Activated B cell treated with CpG ODN at 0.5 μM for 24 hours (primary cell): ENCODE measurements at regions of chr5 and their contacts with region 1.

Region 1: GRCh38 chr5:119340597-119341218 is 15.1 kb upstream of the TNFAIP8 start:
- DNase-seq: no peak
- ATAC-seq: peak; percentile 25
- H3K4me3 Mint-ChIP-seq: peak overlapping the region; percentile 79
- H3K27ac Mint-ChIP-seq: peak overlapping the region; percentile 96
- H3K4me1 Mint-ChIP-seq: peaks cover 95% of the 10 kb centered on the region
- H3K27me3 Mint-ChIP-seq: no peaks in the 10 kb centered on the region
- CTCF ChIP-seq: no peak

Region 2: GRCh38 chr5:119212676-119213075 is 128.0 kb before region 1 on chr5:
- CTCF ChIA-PET with region 1: no interaction called
- POLR2A ChIA-PET with region 1: no interaction called
- intact Hi-C with region 1: no loop called
- DNase-seq: no peak
- ATAC-seq: no peak
- H3K4me3 Mint-ChIP-seq: no peak overlapping the region
- H3K27ac Mint-ChIP-seq: no peak overlapping the region
- H3K4me1 Mint-ChIP-seq: peaks cover 2% of the 10 kb centered on the region
- H3K27me3 Mint-ChIP-seq: no peaks in the 10 kb centered on the region
- CTCF ChIP-seq: no peak

Region 3: DNA sequence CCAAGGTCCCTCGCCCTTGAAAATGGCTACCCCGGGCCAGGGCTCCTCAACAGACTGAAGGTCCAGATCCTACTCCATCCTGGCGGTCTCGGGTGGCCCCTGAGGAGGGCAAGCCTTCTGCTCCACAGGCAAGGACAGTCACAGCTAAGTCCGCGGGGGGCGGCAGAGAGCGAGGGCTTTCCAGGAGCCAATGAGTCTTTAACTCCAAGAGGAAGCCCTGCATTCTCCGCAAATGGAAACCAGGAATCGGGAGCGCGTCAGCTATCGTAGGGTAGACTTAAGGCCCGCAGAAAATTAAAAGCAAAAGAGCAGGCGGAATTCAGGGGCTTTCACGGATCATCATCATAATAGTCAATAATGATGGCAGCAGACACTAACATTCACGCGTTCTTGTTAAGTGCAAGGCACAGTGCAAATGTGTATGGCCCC is 72.7 kb before region 1 on chr5:
- CTCF ChIA-PET with region 1: no interaction called
- POLR2A ChIA-PET with region 1: interaction called, 38 read pairs
- intact Hi-C with region 1: loop called (anchors 1 kb)
- DNase-seq: peak; percentile 62
- ATAC-seq: peak; percentile 65
- H3K4me3 Mint-ChIP-seq: peak overlapping the region; percentile 95
- H3K27ac Mint-ChIP-seq: peak overlapping the region; percentile 95
- H3K4me1 Mint-ChIP-seq: peaks cover 50% of the 10 kb centered on the region
- H3K27me3 Mint-ChIP-seq: no peaks in the 10 kb centered on the region
- CTCF ChIP-seq: no peak

Region 4: DNA sequence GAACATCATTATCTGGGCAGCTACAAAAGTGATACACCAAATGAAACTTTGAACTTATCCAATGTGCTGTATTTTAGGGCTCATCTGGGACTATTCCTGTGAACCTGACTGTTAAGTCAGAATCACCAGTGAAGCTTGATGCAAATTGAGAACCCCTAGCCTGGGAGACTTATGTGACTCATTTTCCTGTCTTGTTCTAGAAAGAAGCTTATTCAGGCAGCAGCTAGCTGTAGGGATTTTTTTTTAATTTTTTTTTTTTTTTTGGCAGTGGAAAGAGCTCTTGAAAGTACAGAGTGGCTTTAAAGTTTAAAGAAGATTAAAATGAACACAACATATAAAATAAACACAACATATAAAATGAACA is 66.0 kb before region 1 on chr5:
- CTCF ChIA-PET with region 1: interaction called, 4 read pairs
- POLR2A ChIA-PET with region 1: interaction called, 38 read pairs
- intact Hi-C with region 1: loop called (anchors 1 kb)
- DNase-seq: no peak
- ATAC-seq: peak; percentile 42
- H3K4me3 Mint-ChIP-seq: peak overlapping the region; percentile 78
- H3K27ac Mint-ChIP-seq: peak overlapping the region; percentile 89
- H3K4me1 Mint-ChIP-seq: peaks cover 97% of the 10 kb centered on the region
- H3K27me3 Mint-ChIP-seq: no peaks in the 10 kb centered on the region
- CTCF ChIP-seq: no peak

Region 5: DNA sequence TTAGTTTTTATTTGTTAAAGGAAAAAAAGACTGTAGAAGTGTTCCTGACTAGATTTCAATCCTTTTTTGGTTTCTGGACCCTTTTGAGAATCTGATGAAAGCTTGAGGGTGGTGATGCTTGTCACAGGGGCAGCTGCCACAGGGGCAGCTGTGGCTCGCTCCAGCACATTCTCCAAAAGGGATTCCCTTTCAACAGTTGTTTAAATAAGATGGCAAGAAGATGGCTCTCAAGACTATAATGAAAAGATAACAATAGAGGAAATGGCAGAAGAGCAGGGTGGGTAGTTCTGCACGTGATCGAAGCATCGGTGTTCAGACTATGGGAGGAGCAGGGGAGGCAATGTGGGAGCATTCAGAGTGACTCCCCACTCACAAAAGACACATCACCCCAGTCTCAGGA is 31.4 kb before region 1 on chr5:
- CTCF ChIA-PET with region 1: interaction called, 22 read pairs
- POLR2A ChIA-PET with region 1: interaction called, 7 read pairs
- intact Hi-C with region 1: loop called (anchors 5 kb)
- DNase-seq: no peak
- ATAC-seq: no peak
- H3K4me3 Mint-ChIP-seq: peak overlapping the region; percentile 73
- H3K27ac Mint-ChIP-seq: peak overlapping the region; percentile 92
- H3K4me1 Mint-ChIP-seq: peaks cover 94% of the 10 kb centered on the region
- H3K27me3 Mint-ChIP-seq: no peaks in the 10 kb centered on the region
- CTCF ChIP-seq: no peak

Region 6: GRCh38 chr5:119328753-119329602 is 11.7 kb before region 1 on chr5:
- CTCF ChIA-PET with region 1: interaction called, 4 read pairs
- POLR2A ChIA-PET with region 1: interaction called, 16 read pairs
- intact Hi-C with region 1: loop called (anchors 1 kb)
- DNase-seq: no peak
- ATAC-seq: no peak
- H3K4me3 Mint-ChIP-seq: no peak overlapping the region
- H3K27ac Mint-ChIP-seq: peak overlapping the region; percentile 69
- H3K4me1 Mint-ChIP-seq: peaks cover 94% of the 10 kb centered on the region
- H3K27me3 Mint-ChIP-seq: no peaks in the 10 kb centered on the region
- CTCF ChIP-seq: no peak

Region 7: GRCh38 chr5:119367502-119368237 is 27.0 kb after region 1 on chr5:
- CTCF ChIA-PET with region 1: interaction called, 3 read pairs
- POLR2A ChIA-PET with region 1: interaction called, 388 read pairs
- intact Hi-C with region 1: loop called (anchors 1 kb)
- DNase-seq: no peak
- ATAC-seq: peak; percentile 68
- H3K4me3 Mint-ChIP-seq: peak overlapping the region; percentile 71
- H3K27ac Mint-ChIP-seq: peak overlapping the region; percentile 84
- H3K4me1 Mint-ChIP-seq: peaks cover 89% of the 10 kb centered on the region
- H3K27me3 Mint-ChIP-seq: no peaks in the 10 kb centered on the region
- CTCF ChIP-seq: no peak

Region 8: DNA sequence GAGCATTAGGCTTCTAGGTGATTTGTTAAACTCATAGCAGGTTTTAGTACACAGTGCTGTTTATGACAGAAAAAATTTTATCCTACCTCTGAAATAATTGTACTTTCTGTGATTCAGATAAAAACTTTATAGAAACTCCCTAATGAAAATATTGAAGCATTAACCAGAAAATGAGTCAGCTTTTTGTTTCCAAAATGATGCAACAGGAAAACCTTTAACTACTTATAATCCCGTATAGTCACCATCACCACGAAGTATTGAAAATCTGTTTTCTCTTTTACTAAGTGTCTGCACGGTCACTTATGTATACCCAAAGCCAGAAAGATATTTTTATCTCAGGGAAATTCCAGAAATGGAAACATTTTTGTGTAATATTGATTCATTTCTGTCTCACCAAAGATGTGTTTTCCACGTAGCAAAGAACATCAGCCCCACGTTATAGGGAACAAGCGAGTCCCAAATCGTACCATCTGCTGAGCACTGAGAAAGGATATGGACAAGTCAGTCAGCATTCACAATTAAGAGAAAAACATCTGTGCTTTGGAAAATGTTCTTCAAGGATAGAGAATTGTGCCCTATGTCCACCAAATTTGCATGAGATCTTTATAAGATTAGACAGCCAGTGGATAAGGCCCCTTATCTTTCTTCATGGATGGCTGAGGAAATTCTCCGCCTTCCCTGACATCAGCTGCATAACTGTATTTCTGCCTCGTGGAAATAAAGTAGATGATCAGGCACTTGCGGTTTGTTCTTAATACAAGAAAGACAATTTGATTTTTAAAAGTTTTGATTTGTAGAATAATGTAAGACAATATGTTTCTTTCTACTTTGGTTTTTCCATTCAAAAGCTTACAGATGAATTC is 57.0 kb after region 1 on chr5:
- CTCF ChIA-PET with region 1: no interaction called
- POLR2A ChIA-PET with region 1: interaction called, 9 read pairs
- intact Hi-C with region 1: loop called (anchors 1 kb)
- DNase-seq: no peak
- ATAC-seq: peak; percentile 45
- H3K4me3 Mint-ChIP-seq: peak overlapping the region; percentile 67
- H3K27ac Mint-ChIP-seq: peak overlapping the region; percentile 80
- H3K4me1 Mint-ChIP-seq: peaks cover 88% of the 10 kb centered on the region
- H3K27me3 Mint-ChIP-seq: no peaks in the 10 kb centered on the region
- CTCF ChIP-seq: no peak